ENCODE measurements at regions of chr6 and their contacts with region 1.

Region 1: DNA sequence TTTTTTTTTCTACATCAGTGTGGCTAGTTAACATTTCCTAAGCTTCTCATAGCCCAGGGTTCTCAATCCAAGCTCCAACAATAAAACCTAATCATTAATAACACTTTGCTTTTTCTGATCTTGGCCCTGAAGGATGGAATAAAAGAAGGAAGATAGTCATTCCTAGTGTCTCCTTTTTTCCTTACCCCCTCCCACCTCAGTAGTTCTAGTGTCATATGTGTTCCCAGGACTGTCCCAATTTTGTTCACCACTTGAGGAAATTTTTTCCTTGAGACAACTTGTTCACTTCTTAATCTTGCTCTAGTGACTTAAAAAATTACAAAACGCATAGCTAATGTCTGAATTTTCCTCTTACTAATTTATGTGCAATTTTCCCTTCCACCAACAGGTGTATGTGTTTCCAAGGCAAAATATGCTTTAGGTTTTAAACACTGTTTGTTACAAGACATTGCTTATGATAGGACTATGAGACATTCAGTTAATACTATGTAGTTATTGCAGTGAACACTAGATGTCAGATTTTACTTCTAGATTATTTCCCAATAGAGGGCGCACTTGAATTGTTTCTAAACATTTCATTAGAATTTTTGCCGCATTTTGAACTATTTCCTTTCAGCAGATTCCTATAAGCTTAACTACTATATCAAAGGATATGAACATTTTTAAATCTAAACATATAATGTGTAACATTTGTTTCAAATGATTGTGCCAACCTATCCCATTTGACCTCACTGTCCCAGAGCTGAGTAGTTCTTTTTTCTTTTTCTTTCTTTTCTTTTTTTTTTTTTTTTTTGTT is 18.5 kb upstream of the C6orf141 start:
- DNase-seq: no peak
- H3K4me3 Mint-ChIP-seq: no peak overlapping the region
- H3K27ac Mint-ChIP-seq: no peak overlapping the region
- H3K4me1 Mint-ChIP-seq: no peaks in the 10 kb centered on the region
- H3K27me3 Mint-ChIP-seq: peaks cover 5% of the 10 kb centered on the region

Region 2: DNA sequence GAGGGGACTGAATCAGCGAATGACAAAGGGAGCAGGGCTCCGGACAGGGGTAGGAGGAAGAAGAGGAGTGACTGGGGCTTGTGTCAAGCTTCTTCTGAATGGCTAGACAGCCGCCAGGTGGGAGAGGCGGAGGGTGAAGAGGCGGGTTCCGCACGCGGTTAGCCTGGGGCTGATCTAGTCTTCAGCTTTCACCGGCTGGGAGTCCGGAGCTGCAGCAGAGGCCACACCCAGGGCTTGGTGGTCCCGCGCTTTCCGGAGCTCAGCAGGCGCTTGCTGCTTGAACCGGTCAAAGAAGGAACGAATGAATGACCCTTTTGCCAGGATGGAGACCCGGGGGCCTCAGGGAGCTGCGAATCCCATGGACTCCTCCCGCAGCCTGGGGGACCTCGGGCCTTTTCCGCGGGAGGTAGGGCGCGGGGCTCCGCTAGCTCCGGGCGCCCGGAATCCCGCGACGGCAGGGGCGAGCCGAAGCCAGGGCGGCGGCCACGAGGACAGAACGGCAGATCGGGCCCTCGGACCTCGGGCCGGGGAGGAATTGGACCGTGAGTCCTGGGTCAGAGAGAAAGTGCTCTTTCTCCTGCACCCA is 18.6 kb after region 1 on chr6 and contains the start of gene C6orf141:
- CTCF ChIA-PET with region 1: interaction called, 21 read pairs
- intact Hi-C with region 1: no loop called
- DNase-seq: peak; percentile 50
- H3K4me3 Mint-ChIP-seq: peak within 1 kb of the TSS; percentile 61
- H3K27ac Mint-ChIP-seq: no peak within 1 kb of the TSS
- H3K4me1 Mint-ChIP-seq: peaks cover 28% of the 10 kb centered on the region
- H3K27me3 Mint-ChIP-seq: peaks cover 29% of the 10 kb centered on the region
- total RNA-seq, gene C6orf141: 0.42 to 0.91 TPM

Region 3: GRCh38 chr6:49606696-49607390 is 74.9 kb after region 1 on chr6:
- CTCF ChIA-PET with region 1: interaction called, 91 read pairs
- intact Hi-C with region 1: loop called (anchors 1 kb)
- DNase-seq: peak; percentile 26
- H3K4me3 Mint-ChIP-seq: no peak overlapping the region
- H3K27ac Mint-ChIP-seq: no peak overlapping the region
- H3K4me1 Mint-ChIP-seq: no peaks in the 10 kb centered on the region
- H3K27me3 Mint-ChIP-seq: peaks cover 10% of the 10 kb centered on the region

Region 4: GRCh38 chr6:49849213-49849907 is 317.4 kb after region 1 on chr6:
- CTCF ChIA-PET with region 1: interaction called, 16 read pairs
- intact Hi-C with region 1: loop called (anchors 1 kb)
- DNase-seq: no peak
- H3K4me3 Mint-ChIP-seq: no peak overlapping the region
- H3K27ac Mint-ChIP-seq: no peak overlapping the region
- H3K4me1 Mint-ChIP-seq: no peaks in the 10 kb centered on the region
- H3K27me3 Mint-ChIP-seq: peaks cover 2% of the 10 kb centered on the region